ENCODE measurements at regions of chr13 and their contacts with region 1.

Region 1: GRCh38 chr13:51241720-51242119 is 19.5 kb downstream of the FAM124A start:
- DNase-seq: no peak
- ATAC-seq: no peak
- H3K4me3 ChIP-seq: no peak overlapping the region
- H3K27ac ChIP-seq: peak overlapping the region in 2 of 12 donors; percentile 37 to 77
- H3K4me1 ChIP-seq: peaks cover 0 to 52% (median 7%) of the 10 kb centered on the region in 12 donors
- H3K27me3 ChIP-seq: no peaks in the 10 kb centered on the region
- CTCF ChIP-seq: no peak
- POLR2A ChIP-seq: no peak

Region 2: GRCh38 chr13:51206584-51206983 is 35.1 kb before region 1 on chr13:
- intact Hi-C with region 1: loop called in 1 of 10 experiments (anchors 2 kb)
- DNase-seq: no peak
- ATAC-seq: no peak
- H3K4me3 ChIP-seq: no peak overlapping the region
- H3K27ac ChIP-seq: no peak overlapping the region
- H3K4me1 ChIP-seq: no peaks in the 10 kb centered on the region
- H3K27me3 ChIP-seq: peaks cover 0 to 16% (median 0%) of the 10 kb centered on the region in 9 donors
- CTCF ChIP-seq: no peak
- POLR2A ChIP-seq: no peak

Measured in heart left ventricle (tissue), 16 donors.